Activated T-helper 2 cell treated with anti-CD3 and anti-CD28 coated beads, Interferon-gamma antibody, Interleukin-2, Interleukin-4, amounts not matched to agents 10 μg/mL and 5 μg/mL and 100 μg/mL, durations not matched to agents 14 hours and 24 hours and 36 hours (primary cell): ENCODE measurements at regions of chr3 and their contacts with region 1.

Region 1: DNA sequence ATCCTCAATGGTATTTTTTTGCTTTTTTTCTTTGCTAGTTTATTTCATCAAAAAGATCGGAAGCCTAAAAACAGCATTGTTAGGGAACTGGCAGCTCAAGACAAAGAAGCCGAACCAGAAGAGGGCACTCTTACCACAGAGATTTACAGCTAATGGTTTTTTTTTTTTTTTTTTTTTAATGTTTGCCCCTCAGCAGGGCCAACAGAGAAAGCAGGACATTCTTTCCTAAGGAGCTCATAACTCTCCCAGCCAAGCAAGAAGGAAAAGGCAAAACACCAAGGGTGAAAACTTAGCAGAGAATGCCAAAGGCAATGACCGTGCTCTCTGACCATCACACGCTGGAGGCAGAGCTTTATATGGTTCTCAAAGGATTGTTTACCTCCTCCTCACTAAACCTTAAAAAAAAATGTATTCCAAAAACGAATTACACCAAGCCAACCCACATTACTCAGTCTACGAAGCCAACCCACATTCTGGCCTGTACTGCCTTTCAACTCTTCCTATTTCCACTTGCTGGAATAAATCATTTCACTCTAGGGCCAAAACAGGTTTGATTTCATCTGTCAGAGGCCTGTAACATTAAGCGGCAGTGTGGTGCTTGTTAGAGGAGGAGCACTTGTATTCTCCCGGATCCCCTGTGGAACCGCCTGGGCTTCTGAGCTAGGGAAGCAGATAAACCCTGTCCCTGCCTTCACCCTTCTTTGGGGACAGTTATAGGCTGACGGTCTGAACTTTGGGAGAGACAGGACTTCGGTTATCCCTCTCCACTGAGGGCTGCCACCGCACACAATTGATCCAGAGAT is 35.6 kb upstream of the GYG1 start:
- DNase-seq: no peak
- H3K4me3 Mint-ChIP-seq: no peak overlapping the region
- H3K27ac Mint-ChIP-seq: no peak overlapping the region
- H3K4me1 Mint-ChIP-seq: peaks cover 10% of the 10 kb centered on the region
- H3K27me3 Mint-ChIP-seq: peaks cover 11% of the 10 kb centered on the region

Region 2: GRCh38 chr3:149273096-149273751 is 317.5 kb after region 1 on chr3:
- intact Hi-C with region 1: loop called (anchors 1 kb)
- DNase-seq: no peak
- H3K4me3 Mint-ChIP-seq: no peak overlapping the region
- H3K27ac Mint-ChIP-seq: no peak overlapping the region
- H3K4me1 Mint-ChIP-seq: peaks cover 20% of the 10 kb centered on the region
- H3K27me3 Mint-ChIP-seq: peaks cover 15% of the 10 kb centered on the region